ENCODE measurements at regions of chr22 and their contacts with region 1.

Region 1: GRCh38 chr22:22181341-22181850 is 63.2 kb upstream of the VPREB1 start:
- DNase-seq: no peak
- H3K4me3 Mint-ChIP-seq: no peak overlapping the region
- H3K27ac Mint-ChIP-seq: no peak overlapping the region
- H3K4me1 Mint-ChIP-seq: no peaks in the 10 kb centered on the region
- H3K27me3 Mint-ChIP-seq: peaks cover 37% of the 10 kb centered on the region

Region 2: DNA sequence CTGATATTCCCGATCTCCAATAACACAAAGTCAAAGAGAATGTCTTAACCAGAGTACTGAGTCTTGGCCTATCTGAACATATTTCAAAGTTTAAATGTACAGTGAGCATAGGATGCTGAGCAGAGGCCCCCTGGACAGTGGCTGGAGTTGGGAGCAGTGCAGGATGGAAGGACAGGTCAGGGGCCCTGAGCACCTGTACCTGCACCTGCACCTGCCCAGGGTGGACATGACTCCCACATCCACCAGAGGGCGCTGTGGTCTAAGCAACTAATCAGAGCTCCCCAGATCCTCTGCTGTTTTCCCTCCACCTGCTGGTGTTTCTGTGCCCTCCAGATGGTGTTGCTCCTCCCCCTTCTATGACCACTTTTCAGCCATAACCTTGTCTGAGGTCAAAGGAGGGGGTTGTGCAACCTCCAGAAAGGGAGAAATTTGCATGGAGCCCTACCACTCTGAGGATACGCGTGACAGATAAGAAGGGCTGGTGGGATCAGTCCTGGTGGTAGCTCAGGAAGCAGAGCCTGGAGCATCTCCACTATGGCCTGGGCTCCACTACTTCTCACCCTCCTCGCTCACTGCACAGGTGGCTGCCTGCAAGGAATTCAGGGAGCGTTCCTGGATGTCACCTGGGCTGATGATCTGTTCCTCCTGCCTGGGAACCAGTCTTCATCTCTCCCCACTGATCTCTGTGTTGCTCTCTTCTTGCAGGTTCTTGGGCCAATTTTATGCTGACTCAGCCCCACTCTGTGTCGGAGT is 14.0 kb after region 1 on chr22:
- CTCF ChIA-PET with region 1: interaction called, 57 read pairs
- POLR2A ChIA-PET with region 1: no interaction called
- intact Hi-C with region 1: no loop called
- DNase-seq: peak; percentile 86
- H3K4me3 Mint-ChIP-seq: no peak overlapping the region
- H3K27ac Mint-ChIP-seq: no peak overlapping the region
- H3K4me1 Mint-ChIP-seq: no peaks in the 10 kb centered on the region
- H3K27me3 Mint-ChIP-seq: peaks cover 15% of the 10 kb centered on the region

Region 3: DNA sequence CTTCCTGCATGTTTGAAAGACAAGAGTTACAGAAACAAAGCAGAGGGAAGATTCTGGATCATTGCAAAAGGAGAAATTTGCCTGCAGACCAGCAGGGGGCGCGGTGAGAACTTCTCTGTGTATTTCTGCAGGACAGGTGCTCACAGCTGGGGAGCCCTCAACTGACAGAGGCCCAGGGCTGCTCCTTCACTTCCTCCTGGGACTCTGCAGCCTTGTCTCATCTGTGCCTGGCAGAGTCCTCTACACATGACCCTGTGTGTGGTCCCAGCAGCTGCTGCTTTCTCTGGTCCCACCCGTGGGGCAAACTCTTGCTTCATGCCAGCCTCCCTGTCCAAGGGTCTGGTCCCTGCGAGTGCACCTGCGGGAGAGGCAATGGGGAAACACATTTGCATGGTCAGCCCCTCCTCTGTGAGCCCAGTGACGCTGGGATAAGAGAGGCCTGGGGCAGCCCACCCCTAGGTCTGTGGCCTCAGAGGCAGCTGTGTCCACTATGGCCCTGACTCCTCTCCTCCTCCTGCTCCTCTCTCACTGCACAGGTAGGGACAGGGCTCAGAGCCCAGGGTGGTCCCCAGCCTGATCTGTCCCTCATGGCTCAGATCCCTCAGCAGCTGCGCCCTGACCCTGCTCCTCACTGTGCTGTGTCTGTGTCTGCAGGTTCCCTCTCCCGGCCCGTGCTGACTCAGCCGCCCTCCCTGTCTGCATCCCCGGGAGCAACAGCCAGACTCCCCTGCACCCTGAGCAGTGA is 20.0 kb after region 1 on chr22:
- CTCF ChIA-PET with region 1: interaction called, 57 read pairs
- POLR2A ChIA-PET with region 1: no interaction called
- intact Hi-C with region 1: no loop called
- DNase-seq: peak; percentile 79
- H3K4me3 Mint-ChIP-seq: no peak overlapping the region
- H3K27ac Mint-ChIP-seq: no peak overlapping the region
- H3K4me1 Mint-ChIP-seq: peaks cover 3% of the 10 kb centered on the region
- H3K27me3 Mint-ChIP-seq: peaks cover 8% of the 10 kb centered on the region